ENCODE measurements at regions of chr19 and their contacts with region 1.

Region 1: DNA sequence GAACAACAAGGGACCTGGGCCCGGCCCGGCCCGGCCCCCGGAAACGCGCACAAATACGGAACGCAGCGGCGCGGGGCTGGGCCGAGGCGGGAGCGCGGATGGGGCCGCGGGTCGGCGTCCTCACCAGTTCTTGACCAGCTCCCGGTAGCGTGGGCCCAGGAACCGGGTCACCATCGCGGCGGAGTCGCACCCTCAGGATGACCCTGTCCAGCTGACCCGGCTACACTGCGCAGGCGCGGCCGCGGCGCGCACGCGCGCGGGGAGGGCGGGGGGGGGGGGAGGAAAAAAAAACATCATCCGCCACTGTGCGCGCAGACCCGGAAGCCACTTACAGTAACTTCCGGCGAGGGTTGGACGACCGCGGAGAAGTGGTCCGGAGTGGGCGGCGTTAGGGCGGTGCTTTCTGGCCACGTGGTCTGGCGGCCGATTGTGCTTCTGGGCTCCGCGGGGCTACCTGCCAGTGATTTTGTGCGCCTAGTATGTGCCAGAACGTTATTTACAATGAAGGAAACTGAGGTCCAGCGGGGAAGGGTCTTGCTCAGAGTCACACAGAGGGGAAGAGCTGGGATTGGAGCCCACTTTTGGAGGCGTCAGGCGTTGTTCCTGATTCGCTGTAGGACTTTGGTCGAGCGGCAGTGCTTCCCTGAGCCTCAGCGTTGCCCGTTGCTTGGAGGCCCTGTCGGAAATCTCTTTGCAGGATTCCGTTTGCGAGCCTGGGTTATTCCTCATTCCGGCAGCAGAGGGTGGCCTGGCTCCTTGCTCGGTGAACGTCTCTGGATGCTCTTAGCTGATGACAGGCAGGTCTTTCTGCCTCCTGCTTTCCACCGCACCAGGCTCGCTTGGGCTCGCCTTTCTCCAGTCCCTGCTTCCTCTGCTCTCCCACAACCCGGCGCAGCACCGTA is at the start of gene UQCR11:
- DNase-seq: peak; percentile 92
- H3K4me3 ChIP-seq: peak within 1 kb of the TSS; percentile 88 to 99 (median 88)
- H3K27ac ChIP-seq: peak within 1 kb of the TSS; percentile 68
- H3K4me1 ChIP-seq: peaks cover 5% of the 10 kb centered on the region
- H3K27me3 ChIP-seq: no peaks in the 10 kb centered on the region
- CTCF ChIP-seq: peak; percentile 44 to 72
- total RNA-seq, gene UQCR11: 28.3 to 250 TPM

Region 2: DNA sequence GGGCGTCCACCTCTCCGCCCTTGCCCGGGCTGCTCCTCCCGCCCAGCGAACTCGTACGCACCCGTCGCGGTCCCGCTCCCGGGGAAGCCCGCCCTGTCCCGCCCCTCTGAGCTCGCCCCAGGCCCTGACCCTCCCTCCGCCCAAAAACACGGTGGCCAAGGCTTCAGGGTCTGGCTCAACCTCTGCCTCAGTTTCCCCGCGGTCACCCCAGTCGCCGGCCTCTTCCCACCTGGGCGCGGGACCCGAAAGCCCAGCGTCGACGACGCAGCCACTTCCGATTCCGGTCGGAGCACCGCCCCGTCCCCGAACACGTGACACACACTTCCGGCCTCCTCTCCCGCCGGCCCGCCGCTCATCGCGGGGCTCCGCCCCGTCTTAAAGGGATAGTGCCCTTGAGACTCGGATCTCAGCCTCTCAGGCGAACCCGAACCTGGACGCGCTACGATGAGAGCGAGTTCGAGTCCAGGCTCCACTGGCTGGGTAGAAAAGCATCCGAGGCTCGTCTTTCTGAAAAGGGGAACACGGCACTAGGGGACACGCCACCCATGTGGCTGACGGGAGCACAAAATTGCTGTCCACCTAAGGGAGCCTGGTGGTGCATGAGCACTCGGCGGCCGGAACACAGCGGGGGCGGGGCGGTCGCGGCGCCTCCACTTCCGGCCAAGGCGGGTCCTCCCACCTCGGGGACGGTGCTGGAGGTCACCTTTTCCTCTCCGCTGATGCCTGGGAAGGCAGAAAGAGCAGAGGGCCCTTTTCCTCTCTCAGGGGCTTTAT is 126.4 kb before region 1 on chr19 and contains the start of gene C19orf25:
- CTCF ChIA-PET with region 1: no interaction called
- dilution Hi-C with region 1: loop called (anchors 10 kb)
- in situ Hi-C with region 1: no loop called
- intact Hi-C with region 1: no loop called
- DNase-seq: peak; percentile 91
- H3K4me3 ChIP-seq: peak within 1 kb of the TSS; percentile 88 to 92 (median 91)
- H3K27ac ChIP-seq: peak within 1 kb of the TSS; percentile 43
- H3K4me1 ChIP-seq: peaks cover 3% of the 10 kb centered on the region
- H3K27me3 ChIP-seq: no peaks in the 10 kb centered on the region
- CTCF ChIP-seq: no peak
- total RNA-seq, gene C19orf25: 25.8 to 41.9 TPM

Region 3: DNA sequence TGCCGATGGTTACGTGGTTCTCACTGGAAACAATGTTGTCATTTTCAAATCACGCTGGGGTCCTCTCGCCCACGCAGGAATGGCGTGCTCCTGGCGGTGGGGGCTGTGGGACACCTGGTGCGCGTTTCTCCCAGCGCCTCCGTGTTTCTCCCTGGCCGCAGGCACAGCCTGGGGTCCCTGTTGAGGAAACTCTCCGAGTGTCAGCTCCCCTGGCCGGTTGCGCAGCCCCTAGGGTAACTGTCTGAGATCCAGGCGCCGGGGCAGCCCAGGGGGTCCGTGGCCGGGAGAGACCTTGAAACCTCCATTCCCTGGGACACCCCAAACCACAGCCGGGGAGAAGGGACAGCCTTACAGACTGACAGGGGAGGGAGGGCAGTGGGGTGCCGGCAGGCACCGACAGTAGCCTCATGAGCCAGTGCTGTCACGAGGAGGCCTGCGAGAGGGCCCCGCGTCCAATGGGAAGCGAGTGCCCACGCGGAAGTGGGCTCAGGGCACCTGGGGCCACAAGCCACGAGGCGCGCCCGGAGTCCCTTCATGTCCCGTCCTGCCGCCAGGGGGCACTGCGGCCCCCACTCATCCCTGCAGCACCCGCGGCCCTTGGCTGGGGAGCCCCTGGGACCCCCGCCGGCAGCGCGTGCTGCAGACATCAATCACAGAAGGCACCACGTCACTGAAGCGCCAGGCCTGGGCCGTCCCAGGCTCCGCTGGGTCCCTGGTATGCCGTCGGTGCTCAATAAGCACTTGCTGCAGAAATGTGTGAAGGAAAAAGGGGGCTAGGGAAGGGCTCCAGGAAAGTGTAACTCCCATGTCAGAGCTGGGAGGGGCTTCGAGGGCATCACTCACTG is 102.2 kb before region 1 on chr19:
- CTCF ChIA-PET with region 1: no interaction called
- dilution Hi-C with region 1: no loop called
- in situ Hi-C with region 1: no loop called
- intact Hi-C with region 1: no loop called
- DNase-seq: no peak
- H3K4me3 ChIP-seq: no peak overlapping the region
- H3K27ac ChIP-seq: no peak overlapping the region
- H3K4me1 ChIP-seq: peaks cover 10% of the 10 kb centered on the region
- H3K27me3 ChIP-seq: no peaks in the 10 kb centered on the region
- CTCF ChIP-seq: peak; percentile 46 to 77

Region 4: GRCh38 chr19:1652471-1653299 is 47.2 kb after region 1 on chr19 and contains the start of gene TCF3:
- CTCF ChIA-PET with region 1: no interaction called
- dilution Hi-C with region 1: no loop called
- in situ Hi-C with region 1: no loop called
- intact Hi-C with region 1: loop called (anchors 1 kb)
- DNase-seq: peak; percentile 99
- H3K4me3 ChIP-seq: peak within 1 kb of the TSS; percentile 74 to 94 (median 74)
- H3K27ac ChIP-seq: peak within 1 kb of the TSS; percentile 98
- H3K4me1 ChIP-seq: peaks cover 9% of the 10 kb centered on the region
- H3K27me3 ChIP-seq: no peaks in the 10 kb centered on the region
- CTCF ChIP-seq: no peak
- total RNA-seq, gene TCF3: 70.7 to 108 TPM

Region 5: GRCh38 chr19:1700002-1700732 is 94.7 kb after region 1 on chr19:
- CTCF ChIA-PET with region 1: no interaction called
- dilution Hi-C with region 1: no loop called
- in situ Hi-C with region 1: no loop called
- intact Hi-C with region 1: no loop called
- DNase-seq: no peak
- H3K4me3 ChIP-seq: peak overlapping the region in 2 of 3 experiments; percentile 33 to 35
- H3K27ac ChIP-seq: no peak overlapping the region
- H3K4me1 ChIP-seq: no peaks in the 10 kb centered on the region
- H3K27me3 ChIP-seq: peaks cover 18% of the 10 kb centered on the region
- CTCF ChIP-seq: no peak

Region 6: DNA sequence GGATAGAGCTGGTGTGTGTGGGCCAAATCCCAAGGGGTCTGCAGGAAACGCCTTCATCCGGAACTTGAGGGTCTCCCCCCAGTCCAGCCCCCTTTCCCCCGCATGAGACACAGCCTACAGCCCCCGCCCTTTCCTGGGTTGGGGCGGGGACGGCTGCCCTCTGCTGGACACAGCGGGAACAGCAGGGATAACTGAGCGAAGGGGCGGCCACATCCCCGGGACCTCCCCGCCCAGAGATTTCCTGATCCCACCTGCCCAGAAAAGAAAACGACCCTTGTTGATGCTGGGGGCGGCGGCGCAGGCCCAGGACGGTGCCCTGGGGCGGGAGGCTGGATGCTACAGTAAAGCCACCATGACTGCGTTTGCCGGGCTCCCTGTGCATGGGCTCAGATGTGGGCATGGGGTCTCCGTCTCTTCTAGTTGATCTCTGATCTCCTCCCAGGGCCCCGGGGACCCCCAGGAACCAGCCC is 162.0 kb after region 1 on chr19:
- CTCF ChIA-PET with region 1: no interaction called
- dilution Hi-C with region 1: no loop called
- in situ Hi-C with region 1: no loop called
- intact Hi-C with region 1: loop called (anchors 2 kb)
- DNase-seq: no peak
- H3K4me3 ChIP-seq: no peak overlapping the region
- H3K27ac ChIP-seq: no peak overlapping the region
- H3K4me1 ChIP-seq: peaks cover 10% of the 10 kb centered on the region
- H3K27me3 ChIP-seq: peaks cover 24% of the 10 kb centered on the region
- CTCF ChIP-seq: peak; percentile 79 to 91

Region 7: GRCh38 chr19:1812469-1813196 is 207.1 kb after region 1 on chr19:
- CTCF ChIA-PET with region 1: no interaction called
- dilution Hi-C with region 1: no loop called
- in situ Hi-C with region 1: no loop called
- intact Hi-C with region 1: loop called (anchors 5 kb)
- DNase-seq: peak; percentile 95
- H3K4me3 ChIP-seq: peak overlapping the region; percentile 57 to 67 (median 58)
- H3K27ac ChIP-seq: peak overlapping the region; percentile 53
- H3K4me1 ChIP-seq: peaks cover 16% of the 10 kb centered on the region
- H3K27me3 ChIP-seq: no peaks in the 10 kb centered on the region
- CTCF ChIP-seq: peak; percentile 63 to 73